ENCODE measurements at regions of chr6 and their contacts with region 1.

Region 1: GRCh38 chr6:90098001-90098531 is 198.6 kb downstream of the BACH2 start:
- DNase-seq: no peak
- H3K4me3 ChIP-seq: no peak overlapping the region
- H3K27ac ChIP-seq: no peak overlapping the region
- H3K4me1 ChIP-seq: peaks cover 1% of the 10 kb centered on the region
- H3K27me3 ChIP-seq: no peaks in the 10 kb centered on the region
- CTCF ChIP-seq: peak; percentile 32; the same call in 1 of the 2 replicates

Region 2: GRCh38 chr6:89970609-89971337 is 127.3 kb before region 1 on chr6:
- CTCF ChIA-PET with region 1: no interaction called
- POLR2A ChIA-PET with region 1: no interaction called
- intact Hi-C with region 1: loop called (anchors 10 kb)
- DNase-seq: peak; percentile 36 to 61
- H3K4me3 ChIP-seq: no peak overlapping the region
- H3K27ac ChIP-seq: peak overlapping the region; percentile 56
- H3K4me1 ChIP-seq: peaks cover 5% of the 10 kb centered on the region; the same call in 1 of the 2 replicates
- H3K27me3 ChIP-seq: no peaks in the 10 kb centered on the region
- CTCF ChIP-seq: peak; percentile 69

Region 3: DNA sequence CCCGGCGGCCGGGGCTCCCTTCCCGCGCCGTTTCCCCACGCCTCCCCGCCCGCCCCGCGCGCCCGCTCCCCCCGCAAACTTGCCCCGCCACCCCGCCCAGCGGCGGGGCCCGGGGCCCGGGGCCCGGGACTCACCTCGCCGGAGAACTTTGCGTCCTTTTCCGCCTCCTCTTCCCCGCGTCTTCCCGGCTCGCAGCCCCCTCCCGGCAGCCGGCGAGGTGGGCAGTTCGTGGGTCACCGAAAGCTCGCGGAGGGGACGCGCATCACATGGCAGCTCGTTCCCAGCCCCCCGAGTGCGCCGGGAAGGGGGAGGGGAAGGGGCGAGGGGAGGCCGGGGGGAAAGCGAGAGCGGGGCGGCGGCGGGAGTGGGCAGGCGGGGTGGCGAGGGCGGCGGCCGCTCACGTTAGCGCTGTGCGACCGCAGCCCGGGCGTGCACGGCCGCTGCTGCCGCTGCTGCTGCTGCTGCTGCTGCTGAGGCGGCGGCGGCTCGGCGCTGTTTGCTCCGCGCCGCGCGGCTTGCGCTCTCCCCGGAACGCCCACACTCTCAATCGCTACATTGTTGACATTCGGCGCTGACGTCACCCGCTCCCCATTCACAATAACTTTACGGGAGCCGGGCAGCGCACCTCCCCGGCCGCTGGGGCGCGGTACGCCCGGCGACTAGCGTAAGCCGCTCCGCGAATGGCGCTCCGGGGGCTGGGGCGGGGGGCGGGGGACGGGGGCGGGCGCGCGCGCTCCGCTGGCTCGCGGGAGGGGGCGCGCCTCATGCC is 198.5 kb after region 1 on chr6 and contains the start of gene BACH2:
- CTCF ChIA-PET with region 1: no interaction called
- POLR2A ChIA-PET with region 1: no interaction called
- intact Hi-C with region 1: loop called (anchors 10 kb)
- DNase-seq: peak; percentile 57 to 78
- H3K4me3 ChIP-seq: peak within 1 kb of the TSS; percentile 57
- H3K27ac ChIP-seq: no peak within 1 kb of the TSS
- H3K4me1 ChIP-seq: peaks cover 9% of the 10 kb centered on the region; the same call in 1 of the 2 replicates
- H3K27me3 ChIP-seq: 0 out of 2 replicates have a peak, but pooled peaks cover 5% of the 10 kb centered on the region
- CTCF ChIP-seq: no peak
- total RNA-seq, gene BACH2: 2.3 and 4.2 TPM in 2 replicates

Region 4: GRCh38 chr6:90478789-90479602 is 380.9 kb after region 1 on chr6:
- CTCF ChIA-PET with region 1: no interaction called
- POLR2A ChIA-PET with region 1: no interaction called
- intact Hi-C with region 1: loop called (anchors 10 kb)
- DNase-seq: peak; percentile 81 to 82
- H3K4me3 ChIP-seq: no peak overlapping the region
- H3K27ac ChIP-seq: no peak overlapping the region
- H3K4me1 ChIP-seq: no peaks in the 10 kb centered on the region
- H3K27me3 ChIP-seq: no peaks in the 10 kb centered on the region
- CTCF ChIP-seq: peak; percentile 81